Naive thymus-derived CD4-positive, alpha-beta T cell (primary cell): ENCODE measurements at regions of chr6 and their contacts with region 1.

Region 1: DNA sequence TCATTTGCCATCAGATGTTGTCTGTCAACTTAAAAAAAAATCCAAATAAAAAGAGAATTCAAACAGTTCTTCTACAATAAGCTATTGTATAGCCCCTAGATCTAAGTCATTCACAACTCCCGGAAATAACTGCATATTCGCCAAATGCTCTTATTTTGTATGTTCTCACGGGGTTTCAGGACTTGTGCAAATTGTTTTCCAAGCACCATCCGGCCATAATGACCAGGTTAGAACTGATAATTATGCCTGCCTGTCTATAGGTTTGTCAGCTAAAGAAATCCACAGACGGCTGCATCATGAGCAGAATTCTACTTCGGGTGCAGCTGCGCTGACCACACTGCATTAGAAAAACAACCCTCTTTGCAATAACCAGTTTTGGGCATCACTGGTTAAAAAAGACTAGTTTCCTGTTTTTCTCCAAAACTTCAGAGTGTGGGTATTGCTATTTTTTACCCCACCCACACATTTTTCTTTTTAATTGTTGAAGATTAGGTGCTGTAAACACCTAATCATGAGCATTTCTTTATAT is 87.7 kb downstream of the HIVEP2 start:
- DNase-seq: peak in 7 of 9 donors; percentile 54 to 77 (median 68)
- ATAC-seq: peak; percentile 59
- H3K4me3 ChIP-seq: peak overlapping the region; percentile 54
- H3K4me3 Mint-ChIP-seq: peak overlapping the region; percentile 72 to 88 (median 84)
- H3K27ac ChIP-seq: peak overlapping the region; percentile 86
- H3K27ac Mint-ChIP-seq: peak overlapping the region; percentile 91 to 100 (median 98)
- H3K4me1 ChIP-seq: peaks cover 62 to 81% of the 10 kb centered on the region in 2 donors
- H3K4me1 Mint-ChIP-seq: peaks cover 54 to 98% (median 93%) of the 10 kb centered on the region in 7 donors
- H3K27me3 ChIP-seq: no peaks in the 10 kb centered on the region
- H3K27me3 Mint-ChIP-seq: no peaks in the 10 kb centered on the region

Region 2: GRCh38 chr6:142756215-142756634 is 101.1 kb before region 1 on chr6:
- CTCF ChIA-PET with region 1: no interaction called
- POLR2A ChIA-PET with region 1: no interaction called
- intact Hi-C with region 1: no loop called
- DNase-seq: no peak
- ATAC-seq: no peak
- H3K4me3 ChIP-seq: no peak overlapping the region
- H3K4me3 Mint-ChIP-seq: no peak overlapping the region
- H3K27ac ChIP-seq: no peak overlapping the region
- H3K27ac Mint-ChIP-seq: peak overlapping the region in 8 of 9 donors; percentile 21 to 88 (median 78)
- H3K4me1 ChIP-seq: no peaks in the 10 kb centered on the region
- H3K4me1 Mint-ChIP-seq: peaks cover 12 to 58% (median 41%) of the 10 kb centered on the region in 7 donors
- H3K27me3 ChIP-seq: no peaks in the 10 kb centered on the region
- H3K27me3 Mint-ChIP-seq: no peaks in the 10 kb centered on the region

Region 3: DNA sequence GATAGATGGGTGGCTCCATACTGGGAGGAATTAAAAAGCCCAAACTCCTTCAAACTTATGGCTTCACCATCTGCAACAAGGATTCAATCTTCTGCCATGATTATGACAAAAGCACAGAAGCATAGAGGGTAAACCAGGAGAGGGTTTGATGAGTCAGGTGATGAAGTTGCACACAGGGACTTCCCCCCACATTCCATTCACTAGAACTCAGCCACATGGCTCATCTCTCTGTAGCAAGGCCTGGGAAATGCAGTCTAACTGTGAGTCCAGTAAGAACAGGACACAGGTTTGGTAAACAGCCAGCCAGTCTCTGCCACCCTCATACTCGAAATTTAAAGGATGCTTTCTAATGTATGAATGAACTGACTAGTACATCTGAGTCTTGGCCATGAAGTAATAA is 55.2 kb before region 1 on chr6:
- CTCF ChIA-PET with region 1: no interaction called
- POLR2A ChIA-PET with region 1: no interaction called
- intact Hi-C with region 1: no loop called
- DNase-seq: peak in 1 of 9 donors; percentile 44
- ATAC-seq: no peak
- H3K4me3 ChIP-seq: no peak overlapping the region
- H3K4me3 Mint-ChIP-seq: peak overlapping the region in 2 of 10 donors; percentile 2 to 3
- H3K27ac ChIP-seq: no peak overlapping the region
- H3K27ac Mint-ChIP-seq: peak overlapping the region in 8 of 9 donors; percentile 8 to 82 (median 62)
- H3K4me1 ChIP-seq: peaks cover 0 to 45% of the 10 kb centered on the region in 2 donors
- H3K4me1 Mint-ChIP-seq: peaks cover 38 to 99% (median 95%) of the 10 kb centered on the region in 7 donors
- H3K27me3 ChIP-seq: no peaks in the 10 kb centered on the region
- H3K27me3 Mint-ChIP-seq: no peaks in the 10 kb centered on the region

Region 4: GRCh38 chr6:142871910-142872331 is 14.6 kb after region 1 on chr6:
- CTCF ChIA-PET with region 1: interaction called, 3 read pairs
- POLR2A ChIA-PET with region 1: interaction called, 21 read pairs
- intact Hi-C with region 1: loop called (anchors 1 kb)
- DNase-seq: peak in 8 of 9 donors; percentile 40 to 74 (median 58)
- ATAC-seq: peak; percentile 90
- H3K4me3 ChIP-seq: no peak overlapping the region
- H3K4me3 Mint-ChIP-seq: peak overlapping the region; percentile 34 to 70 (median 52)
- H3K27ac ChIP-seq: peak overlapping the region; percentile 61
- H3K27ac Mint-ChIP-seq: peak overlapping the region; percentile 73 to 95 (median 91)
- H3K4me1 ChIP-seq: peaks cover 32 to 64% of the 10 kb centered on the region in 2 donors
- H3K4me1 Mint-ChIP-seq: peaks cover 59 to 97% (median 93%) of the 10 kb centered on the region in 7 donors
- H3K27me3 ChIP-seq: no peaks in the 10 kb centered on the region
- H3K27me3 Mint-ChIP-seq: no peaks in the 10 kb centered on the region

Region 5: GRCh38 chr6:142902636-142903053 is 45.3 kb after region 1 on chr6:
- CTCF ChIA-PET with region 1: no interaction called
- POLR2A ChIA-PET with region 1: interaction called, 10 read pairs
- intact Hi-C with region 1: loop called (anchors 1 kb)
- DNase-seq: peak; percentile 60 to 89 (median 84)
- ATAC-seq: peak; percentile 84
- H3K4me3 ChIP-seq: peak overlapping the region; percentile 26
- H3K4me3 Mint-ChIP-seq: peak overlapping the region in 7 of 10 donors; percentile 77 to 88 (median 83)
- H3K27ac ChIP-seq: peak overlapping the region; percentile 88
- H3K27ac Mint-ChIP-seq: peak overlapping the region in 1 of 9 donors; percentile 95
- H3K4me1 ChIP-seq: peaks cover 48 to 71% of the 10 kb centered on the region in 2 donors
- H3K4me1 Mint-ChIP-seq: peaks cover 13 to 64% (median 41%) of the 10 kb centered on the region in 7 donors
- H3K27me3 ChIP-seq: no peaks in the 10 kb centered on the region
- H3K27me3 Mint-ChIP-seq: no peaks in the 10 kb centered on the region

Region 6: GRCh38 chr6:142926494-142927270 is 69.4 kb after region 1 on chr6:
- CTCF ChIA-PET with region 1: interaction called, 3 read pairs
- POLR2A ChIA-PET with region 1: interaction called, 113 read pairs
- intact Hi-C with region 1: loop called in 1 of 2 experiments (anchors 5 kb)
- DNase-seq: peak; percentile 62 to 87 (median 84)
- ATAC-seq: peak; percentile 88
- H3K4me3 ChIP-seq: peak overlapping the region; percentile 87
- H3K4me3 Mint-ChIP-seq: peak overlapping the region; percentile 88 to 99 (median 96)
- H3K27ac ChIP-seq: peak overlapping the region; percentile 100
- H3K27ac Mint-ChIP-seq: peak overlapping the region; percentile 93 to 100 (median 100)
- H3K4me1 ChIP-seq: peaks cover 35 to 40% of the 10 kb centered on the region in 2 donors
- H3K4me1 Mint-ChIP-seq: peaks cover 20 to 75% (median 68%) of the 10 kb centered on the region in 7 donors
- H3K27me3 ChIP-seq: no peaks in the 10 kb centered on the region
- H3K27me3 Mint-ChIP-seq: no peaks in the 10 kb centered on the region